Endothelial cell of umbilical vein (primary cell): ENCODE measurements at regions of chr1 and their contacts with region 1.

Region 1: DNA sequence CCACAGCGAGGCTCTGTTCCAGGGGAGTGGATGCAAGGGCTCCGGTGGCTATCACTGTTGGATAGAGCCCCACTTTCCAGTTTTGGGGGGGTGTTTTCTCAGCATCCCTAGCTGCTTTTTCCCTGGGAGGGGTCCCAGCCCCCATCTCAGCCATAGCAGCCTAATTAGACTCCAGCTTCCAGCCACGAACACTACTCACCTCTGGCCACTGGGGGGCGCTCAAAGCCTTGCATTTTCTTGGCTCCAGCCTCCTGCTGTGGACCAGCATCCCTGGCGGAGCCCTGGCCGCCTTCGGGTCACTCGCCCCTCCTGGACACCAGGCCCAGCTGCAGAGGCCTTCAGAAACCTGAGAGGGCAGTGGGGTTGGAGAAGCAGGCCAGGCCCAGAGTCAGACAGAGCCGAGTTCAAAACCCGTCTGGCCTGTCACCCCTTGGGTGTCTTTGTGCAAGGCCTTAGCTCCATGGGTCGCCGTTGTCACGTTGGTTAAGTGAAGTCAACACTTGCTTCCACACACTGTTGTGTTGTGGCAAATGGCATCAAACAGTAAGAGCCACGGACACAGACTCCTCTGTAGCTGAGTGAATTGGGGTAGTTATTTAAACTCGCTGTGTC is 93.5 kb upstream of the ACTL8 start:
- DNase-seq: peak; percentile 42
- H3K4me3 ChIP-seq: no peak overlapping the region
- H3K27ac ChIP-seq: no peak overlapping the region
- H3K4me1 ChIP-seq: no peaks in the 10 kb centered on the region
- H3K27me3 ChIP-seq: no peaks in the 10 kb centered on the region
- CTCF ChIP-seq: peak; percentile 87 to 90
- POLR2A ChIP-seq: no peak

Region 2: GRCh38 chr1:17648457-17649145 is 13.1 kb before region 1 on chr1:
- CTCF ChIA-PET with region 1: interaction called, 19 read pairs
- POLR2A ChIA-PET with region 1: no interaction called
- dilution Hi-C with region 1: no loop called
- intact Hi-C with region 1: no loop called
- DNase-seq: no peak
- H3K4me3 ChIP-seq: no peak overlapping the region
- H3K27ac ChIP-seq: no peak overlapping the region
- H3K4me1 ChIP-seq: no peaks in the 10 kb centered on the region
- H3K27me3 ChIP-seq: no peaks in the 10 kb centered on the region
- CTCF ChIP-seq: no peak
- POLR2A ChIP-seq: no peak

Region 3: GRCh38 chr1:17696417-17697301 is 35.0 kb after region 1 on chr1:
- CTCF ChIA-PET with region 1: interaction called, 115 read pairs
- POLR2A ChIA-PET with region 1: no interaction called
- dilution Hi-C with region 1: no loop called
- intact Hi-C with region 1: loop called (anchors 1 kb)
- DNase-seq: peak; percentile 43
- H3K4me3 ChIP-seq: no peak overlapping the region
- H3K27ac ChIP-seq: no peak overlapping the region
- H3K4me1 ChIP-seq: no peaks in the 10 kb centered on the region
- H3K27me3 ChIP-seq: no peaks in the 10 kb centered on the region
- CTCF ChIP-seq: peak; percentile 25 to 51
- POLR2A ChIP-seq: no peak

Region 4: GRCh38 chr1:17874710-17875109 is 213.1 kb after region 1 on chr1:
- CTCF ChIA-PET with region 1: no interaction called
- POLR2A ChIA-PET with region 1: no interaction called
- dilution Hi-C with region 1: no loop called
- intact Hi-C with region 1: no loop called
- DNase-seq: no peak
- H3K4me3 ChIP-seq: no peak overlapping the region
- H3K27ac ChIP-seq: no peak overlapping the region
- H3K4me1 ChIP-seq: no peaks in the 10 kb centered on the region
- H3K27me3 ChIP-seq: no peaks in the 10 kb centered on the region
- CTCF ChIP-seq: no peak
- POLR2A ChIP-seq: no peak

Region 5: DNA sequence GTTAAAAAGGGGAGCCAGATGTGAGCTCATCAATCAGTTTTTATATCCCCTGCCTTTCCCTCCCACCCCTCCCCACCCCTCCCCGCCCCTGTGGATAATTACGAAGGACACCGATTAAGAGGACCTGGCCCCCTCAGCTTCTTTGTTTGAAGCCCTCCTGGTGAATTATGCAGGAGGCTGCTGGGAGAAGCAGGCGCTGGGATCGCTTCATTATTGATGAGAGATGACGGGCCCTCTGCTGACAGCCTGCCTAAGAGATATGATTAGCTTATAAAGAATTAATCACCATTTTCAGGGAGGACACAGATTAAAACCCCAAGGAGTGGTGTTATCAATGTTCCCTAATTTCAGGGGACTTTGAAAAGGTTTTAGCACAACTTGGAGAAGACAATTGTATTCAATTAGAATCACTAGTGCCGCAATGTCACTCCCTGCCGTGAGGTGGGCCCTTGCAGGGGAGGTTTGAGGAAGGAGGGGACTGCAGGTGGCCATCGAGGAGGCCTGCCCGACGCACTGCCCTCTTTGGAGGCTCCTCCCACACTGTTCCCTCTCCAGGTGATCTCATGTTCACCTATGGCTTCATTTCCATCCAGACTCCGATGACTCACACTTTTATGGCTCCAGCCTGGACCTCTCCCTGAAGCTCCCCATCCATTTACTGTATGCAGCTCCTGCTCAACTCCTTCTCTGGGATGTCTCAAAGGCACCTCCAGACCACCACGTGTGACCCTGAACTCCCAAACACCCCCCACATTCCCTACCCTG is 752.1 kb after region 1 on chr1:
- CTCF ChIA-PET with region 1: no interaction called
- POLR2A ChIA-PET with region 1: no interaction called
- dilution Hi-C with region 1: no loop called
- intact Hi-C with region 1: no loop called
- DNase-seq: no peak
- H3K4me3 ChIP-seq: no peak overlapping the region
- H3K27ac ChIP-seq: no peak overlapping the region
- H3K4me1 ChIP-seq: no peaks in the 10 kb centered on the region
- H3K27me3 ChIP-seq: no peaks in the 10 kb centered on the region
- CTCF ChIP-seq: no peak
- POLR2A ChIP-seq: no peak

Region 6: GRCh38 chr1:18575620-18576019 is 914.0 kb after region 1 on chr1:
- CTCF ChIA-PET with region 1: interaction called, 161 read pairs
- POLR2A ChIA-PET with region 1: no interaction called
- dilution Hi-C with region 1: no loop called
- intact Hi-C with region 1: no loop called
- DNase-seq: peak; percentile 18
- H3K4me3 ChIP-seq: no peak overlapping the region
- H3K27ac ChIP-seq: no peak overlapping the region
- H3K4me1 ChIP-seq: no peaks in the 10 kb centered on the region
- H3K27me3 ChIP-seq: no peaks in the 10 kb centered on the region
- CTCF ChIP-seq: peak; percentile 39 to 75
- POLR2A ChIP-seq: no peak

Region 7: DNA sequence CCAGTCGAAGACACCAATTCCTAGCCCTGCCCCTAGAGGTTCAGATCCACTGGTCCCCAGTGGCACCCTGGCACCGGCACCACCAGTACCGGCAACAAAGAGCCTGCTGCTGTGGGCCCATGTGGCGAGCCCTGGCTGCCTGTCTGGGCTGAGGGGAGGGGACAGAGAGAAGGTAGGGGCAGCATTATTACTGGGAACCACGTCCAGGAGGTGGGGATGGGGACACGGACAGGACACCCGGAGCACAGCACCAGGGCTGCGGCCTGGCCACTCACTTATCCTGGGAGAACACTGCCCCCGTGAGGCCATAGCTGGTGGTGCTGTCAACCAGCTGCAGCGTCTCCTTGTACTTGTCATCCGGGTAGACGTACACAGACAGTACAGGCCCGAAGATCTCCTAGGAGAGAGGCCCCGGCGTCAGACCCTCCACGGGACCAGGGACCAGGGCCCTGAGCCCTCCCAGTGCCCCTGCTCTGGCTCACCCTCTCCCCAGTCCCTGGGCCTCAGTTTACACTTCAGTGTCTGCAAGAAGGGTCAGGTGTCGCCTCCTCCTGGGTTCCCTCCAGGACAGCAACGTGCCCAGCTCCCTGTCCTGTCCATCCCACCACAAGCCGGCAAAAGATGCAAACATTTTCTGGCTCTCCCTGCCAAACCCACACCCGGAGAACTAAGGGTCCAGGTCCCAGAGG is 1213.6 kb after region 1 on chr1:
- CTCF ChIA-PET with region 1: interaction called, 4 read pairs
- POLR2A ChIA-PET with region 1: no interaction called
- dilution Hi-C with region 1: no loop called
- intact Hi-C with region 1: loop called (anchors 10 kb)
- DNase-seq: peak; percentile 77
- H3K4me3 ChIP-seq: no peak overlapping the region
- H3K27ac ChIP-seq: no peak overlapping the region
- H3K4me1 ChIP-seq: no peaks in the 10 kb centered on the region
- H3K27me3 ChIP-seq: no peaks in the 10 kb centered on the region
- CTCF ChIP-seq: peak; percentile 88 to 97
- POLR2A ChIP-seq: no peak